ENCODE measurements at regions of chr19 and their contacts with region 1.

Region 1: DNA sequence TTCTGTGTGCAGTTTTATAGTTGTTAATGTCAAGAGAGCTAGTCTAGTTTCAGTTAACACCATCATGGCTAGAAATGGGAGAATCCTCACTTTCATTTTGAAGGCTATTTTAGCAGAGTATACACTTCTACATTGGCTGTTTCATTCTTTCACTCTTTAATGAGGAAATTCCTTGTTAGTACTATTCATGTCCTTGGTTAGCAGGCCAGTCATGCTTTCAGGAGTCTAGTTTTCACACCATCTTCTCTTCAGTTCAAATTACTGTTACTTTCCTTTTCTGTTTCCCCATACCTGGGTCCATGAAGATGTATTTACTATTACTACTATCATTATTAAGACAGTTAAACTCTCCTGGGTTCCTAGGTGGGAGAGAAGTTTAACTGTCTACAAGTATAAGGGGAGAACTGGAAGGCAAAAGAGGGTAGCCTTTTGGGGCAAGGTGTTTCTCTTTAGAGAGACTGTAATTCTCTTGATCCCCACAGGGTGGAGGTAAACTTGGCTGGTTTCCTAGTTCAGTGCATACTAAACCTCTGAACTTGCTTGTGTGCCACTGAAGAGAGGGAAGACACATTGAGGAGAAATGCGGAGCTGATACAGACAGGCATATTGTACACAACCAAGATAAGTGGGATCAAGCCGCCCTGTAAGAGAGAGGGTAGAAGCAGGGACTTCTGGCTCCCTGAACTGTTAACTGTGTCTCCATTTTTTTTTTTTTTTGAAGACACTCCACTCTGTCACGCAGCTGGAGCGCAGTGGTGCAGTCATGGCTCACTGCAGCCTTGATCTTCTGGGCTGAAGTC is 41.3 kb upstream of the IGFL4 start:
- DNase-seq: no peak
- H3K4me3 ChIP-seq: no peak overlapping the region
- H3K27ac ChIP-seq: no peak overlapping the region
- H3K4me1 ChIP-seq: peaks cover 0 to 9% (median 6%) of the 10 kb centered on the region in 6 donors
- H3K27me3 ChIP-seq: peaks cover 4 to 78% (median 31%) of the 10 kb centered on the region in 7 donors
- CTCF ChIP-seq: peak in 9 of 11 experiments; percentile 25 to 65 (median 55)
- POLR2A ChIP-seq: no peak

Region 2: GRCh38 chr19:46192992-46193650 is 111.0 kb after region 1 on chr19:
- intact Hi-C with region 1: loop called (anchors 5 kb)
- DNase-seq: no peak
- H3K4me3 ChIP-seq: no peak overlapping the region
- H3K27ac ChIP-seq: peak overlapping the region in 3 of 8 donors; percentile 4 to 67 (median 64)
- H3K4me1 ChIP-seq: peaks cover 0 to 14% (median 0%) of the 10 kb centered on the region in 6 donors
- H3K27me3 ChIP-seq: peaks cover 0 to 93% (median 15%) of the 10 kb centered on the region in 7 donors
- CTCF ChIP-seq: no peak
- POLR2A ChIP-seq: no peak

Region 3: DNA sequence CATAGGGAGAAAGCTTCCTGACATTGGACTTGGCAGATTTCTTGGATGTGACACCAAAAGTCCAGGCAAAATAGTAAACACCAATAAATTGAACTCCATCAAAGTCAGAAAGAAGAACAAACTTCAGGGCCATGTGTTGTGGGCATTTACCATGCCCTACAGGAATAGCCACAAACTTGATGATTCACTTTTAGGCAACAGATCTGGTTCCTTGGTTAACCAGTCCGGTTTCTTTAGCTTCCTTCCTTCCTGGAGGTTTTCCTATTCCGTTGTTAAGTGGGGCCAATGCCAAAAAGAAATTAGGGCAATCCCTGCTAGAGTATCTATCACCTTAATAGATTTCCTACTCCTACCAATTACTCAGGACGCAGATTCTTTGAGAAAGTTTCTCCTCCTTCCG is 172.6 kb after region 1 on chr19:
- intact Hi-C with region 1: no loop called
- DNase-seq: no peak
- H3K4me3 ChIP-seq: no peak overlapping the region
- H3K27ac ChIP-seq: no peak overlapping the region
- H3K4me1 ChIP-seq: no peaks in the 10 kb centered on the region
- H3K27me3 ChIP-seq: peaks cover 0 to 53% (median 0%) of the 10 kb centered on the region in 7 donors
- CTCF ChIP-seq: no peak
- POLR2A ChIP-seq: no peak

Measured in spleen (tissue), 13 donors.